MCF 10A (cell line): ENCODE measurements at regions of chr1 and their contacts with region 1.

Region 1: GRCh38 chr1:180178511-180179161 is 24.0 kb downstream of the QSOX1 start:
- DNase-seq: peak; percentile 72
- H3K4me3 Mint-ChIP-seq: no peak overlapping the region
- H3K27ac Mint-ChIP-seq: peak overlapping the region; percentile 60
- H3K4me1 Mint-ChIP-seq: peaks cover 5% of the 10 kb centered on the region
- H3K27me3 Mint-ChIP-seq: no peaks in the 10 kb centered on the region
- CTCF ChIP-seq: peak; percentile 98

Region 2: DNA sequence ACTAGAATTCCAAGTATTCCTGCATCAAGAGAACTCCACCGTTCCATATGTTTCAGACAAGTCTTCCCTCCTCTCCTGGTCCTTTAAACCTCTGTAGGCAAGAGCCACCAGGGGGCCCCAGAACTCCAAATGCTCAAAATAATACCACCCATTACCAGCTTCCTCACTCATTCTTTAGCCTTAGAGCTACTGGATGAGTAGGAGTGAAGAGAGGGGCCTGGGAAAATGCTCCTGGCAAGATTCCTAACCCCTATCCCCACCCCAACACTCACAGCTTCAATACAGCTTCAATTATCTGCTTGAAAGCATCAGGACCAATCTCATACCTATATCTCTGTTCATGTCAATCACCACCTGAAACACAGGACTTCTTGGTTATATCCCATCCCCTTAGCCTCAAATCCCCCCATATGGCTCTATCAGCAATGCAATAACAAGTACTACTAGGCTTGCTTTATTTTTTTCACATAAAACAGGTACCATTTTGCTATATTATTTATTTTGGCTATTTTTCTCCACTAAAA is 310.8 kb before region 1 on chr1:
- CTCF ChIA-PET with region 1: interaction called, 11 read pairs
- POLR2A ChIA-PET with region 1: no interaction called
- intact Hi-C with region 1: loop called (anchors 1 kb)
- DNase-seq: peak; percentile 79
- H3K4me3 Mint-ChIP-seq: no peak overlapping the region
- H3K27ac Mint-ChIP-seq: no peak overlapping the region
- H3K4me1 Mint-ChIP-seq: peaks cover 34% of the 10 kb centered on the region
- H3K27me3 Mint-ChIP-seq: no peaks in the 10 kb centered on the region
- CTCF ChIP-seq: peak; percentile 81

Region 3: GRCh38 chr1:180070286-180070685 is 108.3 kb before region 1 on chr1:
- CTCF ChIA-PET with region 1: interaction called, 13 read pairs
- POLR2A ChIA-PET with region 1: interaction called, 3 read pairs
- intact Hi-C with region 1: no loop called
- DNase-seq: no peak
- H3K4me3 Mint-ChIP-seq: no peak overlapping the region
- H3K27ac Mint-ChIP-seq: no peak overlapping the region
- H3K4me1 Mint-ChIP-seq: no peaks in the 10 kb centered on the region
- H3K27me3 Mint-ChIP-seq: no peaks in the 10 kb centered on the region
- CTCF ChIP-seq: no peak

Region 4: GRCh38 chr1:180101411-180101810 is 77.2 kb before region 1 on chr1:
- CTCF ChIA-PET with region 1: interaction called, 102 read pairs
- POLR2A ChIA-PET with region 1: interaction called, 6 read pairs
- intact Hi-C with region 1: no loop called
- DNase-seq: no peak
- H3K4me3 Mint-ChIP-seq: no peak overlapping the region
- H3K27ac Mint-ChIP-seq: no peak overlapping the region
- H3K4me1 Mint-ChIP-seq: peaks cover 24% of the 10 kb centered on the region
- H3K27me3 Mint-ChIP-seq: no peaks in the 10 kb centered on the region
- CTCF ChIP-seq: no peak

Region 5: GRCh38 chr1:180198196-180198595 is 19.6 kb after region 1 on chr1:
- CTCF ChIA-PET with region 1: interaction called, 13 read pairs
- POLR2A ChIA-PET with region 1: no interaction called
- intact Hi-C with region 1: no loop called
- DNase-seq: peak; percentile 14
- H3K4me3 Mint-ChIP-seq: no peak overlapping the region
- H3K27ac Mint-ChIP-seq: no peak overlapping the region
- H3K4me1 Mint-ChIP-seq: no peaks in the 10 kb centered on the region
- H3K27me3 Mint-ChIP-seq: no peaks in the 10 kb centered on the region
- CTCF ChIP-seq: no peak